Common myeloid progenitor, CD34-positive (primary cell): ENCODE measurements at regions of chr7 and their contacts with region 1.

Region 1: GRCh38 chr7:44218418-44219201 is 17.8 kb downstream of the YKT6 start:
- DNase-seq: no peak
- H3K4me3 ChIP-seq: no peak overlapping the region
- H3K27ac ChIP-seq: no peak overlapping the region
- H3K4me1 ChIP-seq: no peaks in the 10 kb centered on the region
- H3K27me3 ChIP-seq: no peaks in the 10 kb centered on the region

Region 2: GRCh38 chr7:44206008-44206407 is 12.6 kb before region 1 on chr7:
- CTCF ChIA-PET with region 1: interaction called, 12 read pairs
- POLR2A ChIA-PET with region 1: no interaction called
- DNase-seq: no peak
- H3K4me3 ChIP-seq: no peak overlapping the region
- H3K27ac ChIP-seq: no peak overlapping the region
- H3K4me1 ChIP-seq: peaks cover 0 to 12% (median 12%) of the 10 kb centered on the region in 4 experiments
- H3K27me3 ChIP-seq: no peaks in the 10 kb centered on the region